Activated CD4-positive, alpha-beta memory T cell treated with anti-CD3 and anti-CD28 coated beads for 36 hours (primary cell): ENCODE measurements at regions of chr3 and their contacts with region 1.

Region 1: DNA sequence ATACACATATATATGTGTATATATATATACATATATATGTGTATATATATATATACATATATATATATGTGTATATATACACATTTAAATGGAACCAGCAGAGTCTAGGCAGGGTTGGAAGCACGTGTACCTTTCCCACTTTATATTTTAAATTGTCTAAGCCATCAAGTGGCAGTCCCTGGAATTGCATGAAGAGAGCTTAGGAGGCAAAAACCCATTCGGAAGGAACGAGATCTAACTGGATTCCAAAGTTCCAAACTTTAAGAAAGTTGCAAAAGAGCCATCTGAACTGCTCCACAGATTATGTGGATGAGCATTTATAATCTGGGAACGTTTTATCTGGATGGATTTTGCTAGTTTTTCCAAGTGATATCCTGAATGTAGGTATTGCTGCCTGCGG is 186.5 kb downstream of the FOXP1 start:
- DNase-seq: no peak
- H3K4me3 Mint-ChIP-seq: no peak overlapping the region
- H3K27ac Mint-ChIP-seq: no peak overlapping the region
- H3K4me1 Mint-ChIP-seq: peaks cover 72% of the 10 kb centered on the region
- H3K27me3 Mint-ChIP-seq: peaks cover 2% of the 10 kb centered on the region

Region 2: GRCh38 chr3:71380096-71380495 is 16.9 kb before region 1 on chr3:
- CTCF ChIA-PET with region 1: interaction called, 10 read pairs
- POLR2A ChIA-PET with region 1: interaction called, 4 read pairs
- intact Hi-C with region 1: loop called (anchors 1 kb)
- DNase-seq: no peak
- H3K4me3 Mint-ChIP-seq: no peak overlapping the region
- H3K27ac Mint-ChIP-seq: peak overlapping the region; percentile 85
- H3K4me1 Mint-ChIP-seq: peaks cover 82% of the 10 kb centered on the region
- H3K27me3 Mint-ChIP-seq: no peaks in the 10 kb centered on the region

Region 3: DNA sequence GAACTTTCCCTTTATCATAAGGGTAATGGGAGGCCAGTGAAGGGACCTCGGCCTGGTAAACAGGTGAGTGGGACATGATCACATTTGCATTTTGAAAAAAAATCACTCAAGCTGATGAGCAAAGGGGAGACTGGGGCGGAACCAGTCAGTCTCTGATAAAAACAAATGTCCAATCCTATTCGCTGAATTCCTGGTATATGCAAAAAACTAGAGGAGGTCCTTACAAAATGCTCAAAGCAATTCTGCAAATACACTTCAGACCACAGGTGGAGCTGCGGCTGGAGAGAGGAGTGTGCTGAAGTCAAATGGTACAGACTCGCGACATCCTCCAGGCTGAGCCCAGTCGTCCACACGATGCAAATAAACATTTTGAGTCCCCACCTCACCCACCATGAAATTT is 19.8 kb after region 1 on chr3:
- CTCF ChIA-PET with region 1: interaction called, 12 read pairs
- POLR2A ChIA-PET with region 1: no interaction called
- intact Hi-C with region 1: loop called (anchors 1 kb)
- DNase-seq: peak; percentile 62
- H3K4me3 Mint-ChIP-seq: peak overlapping the region; percentile 21
- H3K27ac Mint-ChIP-seq: peak overlapping the region; percentile 67
- H3K4me1 Mint-ChIP-seq: peaks cover 80% of the 10 kb centered on the region
- H3K27me3 Mint-ChIP-seq: no peaks in the 10 kb centered on the region

Region 4: GRCh38 chr3:71423151-71423906 is 26.3 kb after region 1 on chr3:
- CTCF ChIA-PET with region 1: interaction called, 10 read pairs
- POLR2A ChIA-PET with region 1: interaction called, 5 read pairs
- intact Hi-C with region 1: loop called (anchors 1 kb)
- DNase-seq: no peak
- H3K4me3 Mint-ChIP-seq: no peak overlapping the region
- H3K27ac Mint-ChIP-seq: peak overlapping the region; percentile 85
- H3K4me1 Mint-ChIP-seq: peaks cover 81% of the 10 kb centered on the region
- H3K27me3 Mint-ChIP-seq: no peaks in the 10 kb centered on the region